ENCODE measurements at regions of chr2 and their contacts with region 1.

Region 1: GRCh38 chr2:74488644-74489481 is 6.0 kb downstream of the TTC31 start:
- DNase-seq: no peak
- ATAC-seq: peak; percentile 71
- H3K4me3 ChIP-seq: no peak overlapping the region
- H3K27ac ChIP-seq: no peak overlapping the region; the same call in 2 of the 3 replicates
- H3K4me1 ChIP-seq: peaks cover 4 to 8% of the 10 kb centered on the region in 2 experiments; a peak in 4 of 5 replicates
- H3K27me3 ChIP-seq: no peaks in the 10 kb centered on the region
- CTCF ChIP-seq: no peak
- EP300 ChIP-seq: no peak
- POLR2A ChIP-seq: no peak
- RAD21 ChIP-seq: no peak

Region 2: GRCh38 chr2:74499267-74499939 is 10.5 kb after region 1 on chr2 and contains the start of gene LBX2:
- CTCF ChIA-PET with region 1: no interaction called
- POLR2A ChIA-PET with region 1: interaction called, 13 read pairs
- in situ Hi-C with region 1: no loop called
- intact Hi-C with region 1: no loop called
- DNase-seq: no peak
- ATAC-seq: no peak
- H3K4me3 ChIP-seq: no peak within 1 kb of the TSS
- H3K27ac ChIP-seq: no peak within 1 kb of the TSS
- H3K4me1 ChIP-seq: peaks cover 15 to 50% of the 10 kb centered on the region in 2 experiments; a peak in 4 of 5 replicates
- H3K27me3 ChIP-seq: no peaks in the 10 kb centered on the region
- CTCF ChIP-seq: no peak
- EP300 ChIP-seq: no peak
- POLR2A ChIP-seq: no peak
- RAD21 ChIP-seq: no peak
- polyA plus RNA-seq, gene LBX2: 0.39 TPM in 1 of 2 experiments, not detected in the other

Region 3: GRCh38 chr2:74573747-74574562 is 85.1 kb after region 1 on chr2:
- CTCF ChIA-PET with region 1: no interaction called
- POLR2A ChIA-PET with region 1: no interaction called
- in situ Hi-C with region 1: loop called (anchors 5 kb)
- intact Hi-C with region 1: no loop called
- DNase-seq: peak in 2 of 4 experiments; percentile 63 to 70
- ATAC-seq: peak; percentile 76
- H3K4me3 ChIP-seq: no peak overlapping the region
- H3K27ac ChIP-seq: peak overlapping the region; percentile 43
- H3K4me1 ChIP-seq: peaks cover 0 to 42% of the 10 kb centered on the region in 2 experiments; a peak in 4 of 5 replicates
- H3K27me3 ChIP-seq: no peaks in the 10 kb centered on the region
- CTCF ChIP-seq: no peak; a peak in 1 of 6 replicates
- EP300 ChIP-seq: peak; percentile 48; the same call in 1 of the 2 replicates
- POLR2A ChIP-seq: 0 out of 2 replicates have a peak, but pooled peaks have one; percentile 24
- RAD21 ChIP-seq: no peak; a peak in 1 of 4 replicates